Naive thymus-derived CD4-positive, alpha-beta T cell (primary cell): ENCODE measurements at regions of chr1 and their contacts with region 1.

Region 1: DNA sequence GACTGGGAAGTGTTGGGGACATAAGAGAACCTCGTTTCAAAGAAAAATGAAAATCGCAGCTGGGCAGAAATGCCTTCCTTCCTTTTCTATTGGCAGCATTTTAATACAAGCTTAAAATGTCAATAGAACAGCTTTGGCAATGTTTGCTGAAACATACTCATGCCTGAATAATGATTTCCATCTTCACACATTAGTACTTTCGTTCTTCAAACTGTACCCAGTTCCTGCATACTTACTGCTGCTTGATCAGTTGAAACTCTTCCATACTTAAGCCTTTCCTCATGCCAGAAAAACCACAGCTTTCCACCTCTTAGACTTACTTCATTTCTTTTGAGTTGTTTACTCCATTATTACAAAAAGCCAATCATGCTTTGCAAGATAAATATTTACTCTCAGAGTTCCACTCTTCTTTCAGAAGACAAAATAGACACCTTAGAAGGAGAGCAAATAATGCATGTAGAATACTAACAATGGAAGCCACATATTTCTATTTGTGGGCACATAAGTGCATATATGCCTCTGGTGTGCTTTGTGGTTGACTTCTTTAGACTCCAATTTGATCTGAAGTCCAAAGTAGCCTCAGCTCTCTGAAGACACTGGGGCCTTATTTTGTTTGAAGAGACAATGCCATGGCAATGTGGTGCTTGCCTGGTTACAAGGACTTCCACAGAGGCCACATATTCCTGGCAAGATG is 22.7 kb upstream of the CD55 start:
- DNase-seq: no peak
- ATAC-seq: no peak
- H3K4me3 ChIP-seq: no peak overlapping the region
- H3K4me3 Mint-ChIP-seq: peak overlapping the region in 1 of 10 donors; percentile 12
- H3K27ac ChIP-seq: no peak overlapping the region
- H3K27ac Mint-ChIP-seq: peak overlapping the region in 3 of 9 donors; percentile 18 to 44 (median 26)
- H3K4me1 ChIP-seq: no peaks in the 10 kb centered on the region
- H3K4me1 Mint-ChIP-seq: peaks cover 12 to 26% (median 20%) of the 10 kb centered on the region in 7 donors
- H3K27me3 ChIP-seq: no peaks in the 10 kb centered on the region
- H3K27me3 Mint-ChIP-seq: no peaks in the 10 kb centered on the region

Region 2: DNA sequence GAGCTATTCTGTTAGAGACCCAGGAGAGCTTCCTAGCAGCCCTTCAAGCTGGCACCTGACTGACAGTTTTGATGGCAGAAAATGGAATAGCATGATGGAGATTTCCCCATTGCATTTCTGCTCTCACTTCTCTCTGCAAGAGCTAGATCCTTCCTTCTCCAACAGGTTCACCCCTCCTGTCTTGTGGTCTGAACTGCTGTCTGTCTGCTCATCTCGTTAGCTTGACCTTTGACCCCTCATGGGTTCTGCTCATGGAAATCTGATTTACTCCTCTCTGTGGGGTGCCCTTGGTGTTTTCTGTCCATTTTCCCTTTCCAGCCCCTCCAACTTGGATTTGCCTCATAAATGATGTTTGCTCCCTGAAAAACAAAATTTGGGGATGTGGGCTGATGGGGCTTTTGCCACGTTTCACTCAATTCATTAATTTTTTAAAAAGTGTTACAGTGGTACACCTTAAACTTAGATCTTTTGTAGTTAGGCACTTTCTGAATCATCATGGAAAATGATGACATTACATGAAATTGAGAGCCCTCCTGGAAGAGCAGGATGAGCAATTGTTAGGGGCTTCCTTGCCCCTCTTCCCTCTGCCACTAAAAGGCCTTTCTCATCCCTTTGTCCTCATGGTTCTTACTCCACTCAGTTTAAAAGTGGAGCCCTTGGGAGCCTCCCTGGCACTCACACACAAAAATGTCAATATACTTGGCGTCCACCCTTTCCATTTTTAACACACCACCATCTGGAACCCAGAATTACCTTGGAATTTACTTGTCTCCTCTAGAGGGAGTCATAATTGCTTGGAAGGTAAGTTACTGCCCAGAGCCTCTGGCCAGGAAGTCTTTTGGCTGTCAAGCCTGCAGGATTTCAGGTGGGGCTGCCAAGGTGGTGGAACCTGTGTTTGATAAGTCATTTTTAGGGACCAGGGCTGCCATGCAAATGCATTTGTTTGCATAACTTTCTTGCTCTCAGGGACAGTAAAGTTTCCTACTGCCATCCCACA is 560.1 kb before region 1 on chr1:
- CTCF ChIA-PET with region 1: no interaction called
- POLR2A ChIA-PET with region 1: no interaction called
- intact Hi-C with region 1: no loop called
- DNase-seq: no peak
- ATAC-seq: no peak
- H3K4me3 ChIP-seq: no peak overlapping the region
- H3K4me3 Mint-ChIP-seq: peak overlapping the region in 8 of 10 donors; percentile 20 to 78 (median 54)
- H3K27ac ChIP-seq: no peak overlapping the region
- H3K27ac Mint-ChIP-seq: peak overlapping the region; percentile 75 to 96 (median 90)
- H3K4me1 ChIP-seq: peaks cover 56 to 59% of the 10 kb centered on the region in 2 donors
- H3K4me1 Mint-ChIP-seq: peaks cover 51 to 83% (median 66%) of the 10 kb centered on the region in 7 donors
- H3K27me3 ChIP-seq: no peaks in the 10 kb centered on the region
- H3K27me3 Mint-ChIP-seq: peaks cover 0 to 2% (median 0%) of the 10 kb centered on the region in 5 donors

Region 3: GRCh38 chr1:207282058-207282457 is 16.7 kb before region 1 on chr1:
- CTCF ChIA-PET with region 1: no interaction called
- POLR2A ChIA-PET with region 1: interaction called, 56 read pairs
- intact Hi-C with region 1: loop called in 1 of 2 experiments (anchors 1 kb)
- DNase-seq: peak in 2 of 9 donors; percentile 6 to 25
- ATAC-seq: no peak
- H3K4me3 ChIP-seq: no peak overlapping the region
- H3K4me3 Mint-ChIP-seq: peak overlapping the region in 9 of 10 donors; percentile 18 to 71 (median 60)
- H3K27ac ChIP-seq: no peak overlapping the region
- H3K27ac Mint-ChIP-seq: peak overlapping the region; percentile 55 to 92 (median 78)
- H3K4me1 ChIP-seq: peaks cover 0 to 32% of the 10 kb centered on the region in 2 donors
- H3K4me1 Mint-ChIP-seq: peaks cover 27 to 78% (median 66%) of the 10 kb centered on the region in 7 donors
- H3K27me3 ChIP-seq: no peaks in the 10 kb centered on the region
- H3K27me3 Mint-ChIP-seq: peaks cover 0 to 2% (median 0%) of the 10 kb centered on the region in 5 donors

Region 4: GRCh38 chr1:207848234-207848633 is 549.4 kb after region 1 on chr1:
- CTCF ChIA-PET with region 1: no interaction called
- POLR2A ChIA-PET with region 1: no interaction called
- intact Hi-C with region 1: no loop called
- DNase-seq: peak in 1 of 9 donors; percentile 55
- ATAC-seq: peak; percentile 86
- H3K4me3 ChIP-seq: no peak overlapping the region
- H3K4me3 Mint-ChIP-seq: peak overlapping the region; percentile 39 to 84 (median 62)
- H3K27ac ChIP-seq: peak overlapping the region; percentile 27
- H3K27ac Mint-ChIP-seq: peak overlapping the region in 8 of 9 donors; percentile 5 to 88 (median 66)
- H3K4me1 ChIP-seq: peaks cover 43 to 69% of the 10 kb centered on the region in 2 donors
- H3K4me1 Mint-ChIP-seq: peaks cover 72 to 97% (median 92%) of the 10 kb centered on the region in 7 donors
- H3K27me3 ChIP-seq: no peaks in the 10 kb centered on the region
- H3K27me3 Mint-ChIP-seq: no peaks in the 10 kb centered on the region